AG04449 (cell line): ENCODE measurements at regions of chr1 and their contacts with region 1.

Region 1: GRCh38 chr1:183598386-183598785 is 8.1 kb upstream of the NCF2 start:
- DNase-seq: no peak
- H3K4me3 ChIP-seq: no peak overlapping the region
- CTCF ChIP-seq: no peak

Region 2: GRCh38 chr1:183609313-183609712 is 10.9 kb after region 1 on chr1:
- CTCF ChIA-PET with region 1: interaction called, 18 read pairs
- POLR2A ChIA-PET with region 1: no interaction called
- DNase-seq: no peak
- H3K4me3 ChIP-seq: no peak overlapping the region
- CTCF ChIP-seq: peak; percentile 42